PC-3 (cell line): ENCODE measurements at regions of chr5 and their contacts with region 1.

Region 1: DNA sequence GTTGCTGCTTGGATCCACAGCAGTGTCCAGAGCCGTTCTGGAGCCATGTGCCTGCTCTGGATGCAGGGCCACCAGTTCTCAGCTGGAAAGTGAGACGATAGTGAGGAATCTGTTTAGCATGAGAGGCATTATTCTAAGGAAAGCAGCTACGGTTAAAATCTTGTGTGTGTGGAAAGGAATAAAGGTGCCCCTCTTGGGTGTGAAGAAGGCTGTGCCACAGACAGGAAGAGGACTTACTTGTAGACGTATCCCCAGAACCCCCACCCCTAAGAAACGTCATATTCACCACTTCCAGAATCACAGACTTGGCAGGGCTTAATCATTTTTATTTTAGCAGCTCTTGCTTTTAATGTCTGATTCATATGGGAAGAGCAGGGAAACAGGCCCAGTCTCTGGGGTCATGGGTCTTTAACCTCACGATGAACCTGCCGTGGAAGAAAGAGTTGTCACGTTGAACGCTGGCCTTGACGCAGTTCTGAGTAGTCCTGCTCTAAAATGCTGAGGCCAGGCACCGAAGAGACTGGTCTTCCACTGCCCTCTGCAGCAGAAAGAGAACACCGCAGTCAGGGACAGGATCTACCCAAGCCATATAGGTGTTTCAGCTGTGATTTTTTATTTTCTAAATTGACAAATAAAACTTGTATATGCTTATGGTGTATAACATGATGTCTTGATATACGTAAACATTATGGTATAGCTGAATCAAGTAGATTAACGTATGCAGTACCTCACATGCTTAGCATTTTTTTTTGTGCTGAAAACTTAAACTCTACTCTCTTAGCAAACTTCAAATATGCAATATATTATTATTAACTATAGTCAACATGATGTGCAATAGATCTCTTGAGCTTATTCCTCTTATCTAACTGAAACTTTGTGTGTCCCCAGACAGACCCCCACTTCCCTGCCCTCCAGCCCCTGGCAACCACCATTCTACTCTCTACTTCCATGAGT is 38.8 kb downstream of the CARTPT start:
- DNase-seq: peak; percentile 72
- ATAC-seq: peak; percentile 100
- H3K4me3 ChIP-seq: peak overlapping the region; percentile 50
- H3K27ac ChIP-seq: no peak overlapping the region
- H3K4me1 ChIP-seq: no peaks in the 10 kb centered on the region
- H3K27me3 ChIP-seq: peaks cover 4% of the 10 kb centered on the region; the same call in 1 of the 2 replicates
- CTCF ChIP-seq: peak; percentile 80

Region 2: GRCh38 chr5:71455427-71456361 is 302.2 kb before region 1 on chr5 and contains the start of gene BDP1:
- CTCF ChIA-PET with region 1: no interaction called
- POLR2A ChIA-PET with region 1: no interaction called
- intact Hi-C with region 1: loop called (anchors 5 kb)
- DNase-seq: peak; percentile 94
- ATAC-seq: peak; percentile 86
- H3K4me3 ChIP-seq: peak within 1 kb of the TSS; percentile 100
- H3K27ac ChIP-seq: peak within 1 kb of the TSS; percentile 75
- H3K4me1 ChIP-seq: peaks cover 11% of the 10 kb centered on the region; the same call in 1 of the 2 replicates
- H3K27me3 ChIP-seq: 0 out of 2 replicates have a peak, but pooled peaks cover under 1% of the 10 kb centered on the region
- CTCF ChIP-seq: 0 out of 2 replicates have a peak, but pooled peaks have one; percentile 27
- total RNA-seq, gene BDP1: 17.9 and 18.4 TPM in 2 replicates

Region 3: DNA sequence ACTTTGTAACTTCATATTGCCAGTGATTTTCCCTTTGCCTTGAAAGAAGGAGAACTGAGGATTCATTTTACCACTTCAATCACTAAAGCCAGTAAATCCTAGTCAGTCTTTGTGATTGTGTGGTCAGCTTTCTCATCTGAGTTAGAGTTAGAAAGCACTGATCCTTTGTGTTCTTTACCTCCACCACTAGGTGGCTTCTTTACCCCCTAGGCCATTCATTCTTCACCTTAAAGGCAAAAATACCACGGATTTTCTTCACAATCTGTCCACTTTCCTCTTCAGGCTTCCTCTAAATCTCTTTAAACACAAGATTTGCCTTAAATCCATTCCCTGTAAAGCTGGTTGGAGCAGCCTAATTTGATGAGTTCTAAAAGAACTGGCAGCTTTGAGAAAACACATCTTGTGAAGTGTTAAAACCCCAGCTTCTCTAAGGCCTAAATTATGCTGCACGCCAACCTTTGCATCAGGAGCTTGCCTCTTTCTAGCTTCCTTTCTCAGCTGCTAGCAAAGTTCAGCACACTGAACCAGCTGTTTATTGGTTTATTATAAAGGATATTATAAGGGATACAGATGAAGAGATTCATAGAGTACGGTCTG is 282.0 kb before region 1 on chr5:
- CTCF ChIA-PET with region 1: no interaction called
- POLR2A ChIA-PET with region 1: no interaction called
- intact Hi-C with region 1: loop called (anchors 5 kb)
- DNase-seq: peak; percentile 37
- ATAC-seq: peak; percentile 73
- H3K4me3 ChIP-seq: no peak overlapping the region
- H3K27ac ChIP-seq: no peak overlapping the region
- H3K4me1 ChIP-seq: peaks cover 5% of the 10 kb centered on the region; the same call in 1 of the 2 replicates
- H3K27me3 ChIP-seq: no peaks in the 10 kb centered on the region
- CTCF ChIP-seq: peak; percentile 69

Region 4: GRCh38 chr5:71533614-71534013 is 224.3 kb before region 1 on chr5:
- CTCF ChIA-PET with region 1: no interaction called
- POLR2A ChIA-PET with region 1: no interaction called
- intact Hi-C with region 1: loop called (anchors 10 kb)
- DNase-seq: peak; percentile 43
- ATAC-seq: peak; percentile 43
- H3K4me3 ChIP-seq: no peak overlapping the region
- H3K27ac ChIP-seq: peak overlapping the region; percentile 37; the same call in 1 of the 2 replicates
- H3K4me1 ChIP-seq: peaks cover 11% of the 10 kb centered on the region
- H3K27me3 ChIP-seq: no peaks in the 10 kb centered on the region
- CTCF ChIP-seq: no peak